AG04450 (cell line): ENCODE measurements at regions of chr4 and their contacts with region 1.

Region 1: GRCh38 chr4:67700738-67701516 is at the start of gene UBA6:
- DNase-seq: peak; percentile 92
- H3K4me3 ChIP-seq: peak within 1 kb of the TSS; percentile 78
- H3K27ac ChIP-seq: peak within 1 kb of the TSS; percentile 78
- H3K27me3 ChIP-seq: no peaks in the 10 kb centered on the region
- CTCF ChIP-seq: peak; percentile 40
- polyA plus RNA-seq, gene UBA6: 83.7 and 119 TPM in 2 replicates

Region 2: DNA sequence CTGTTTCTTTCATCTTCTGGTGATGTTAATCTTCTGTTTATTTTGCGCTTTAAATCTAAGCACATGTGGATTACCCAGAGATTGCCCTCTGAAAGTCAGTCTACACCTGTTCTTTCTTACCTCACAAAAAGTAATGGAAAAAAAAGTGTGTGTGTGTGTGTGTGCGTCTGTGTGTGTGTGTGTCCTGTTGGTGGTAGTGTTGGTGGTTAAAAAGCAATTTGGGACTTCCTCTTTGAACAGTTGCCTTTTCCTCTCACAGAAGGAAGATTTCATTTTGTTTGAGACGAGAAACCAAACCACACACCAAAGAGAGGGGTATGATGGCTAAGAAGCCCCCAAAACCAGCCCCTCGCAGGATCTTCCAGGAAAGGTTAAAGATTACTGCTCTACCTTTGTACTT is 142.4 kb before region 1 on chr4 and contains the start of gene STAP1:
- CTCF ChIA-PET with region 1: no interaction called
- POLR2A ChIA-PET with region 1: no interaction called
- DNase-seq: no peak
- H3K4me3 ChIP-seq: no peak within 1 kb of the TSS
- H3K27ac ChIP-seq: no peak within 1 kb of the TSS
- H3K27me3 ChIP-seq: peaks cover 3% of the 10 kb centered on the region
- CTCF ChIP-seq: no peak
- polyA plus RNA-seq, gene STAP1: not detected in 2 replicates

Region 3: GRCh38 chr4:67687636-67688035 is 13.3 kb before region 1 on chr4:
- CTCF ChIA-PET with region 1: interaction called, 11 read pairs
- POLR2A ChIA-PET with region 1: interaction called, 3 read pairs
- DNase-seq: peak; percentile 42
- H3K4me3 ChIP-seq: no peak overlapping the region
- H3K27ac ChIP-seq: no peak overlapping the region
- H3K27me3 ChIP-seq: no peaks in the 10 kb centered on the region
- CTCF ChIP-seq: no peak

Region 4: GRCh38 chr4:67721770-67722597 is 21.1 kb after region 1 on chr4:
- CTCF ChIA-PET with region 1: interaction called, 14 read pairs
- POLR2A ChIA-PET with region 1: no interaction called
- DNase-seq: no peak
- H3K4me3 ChIP-seq: no peak overlapping the region
- H3K27ac ChIP-seq: no peak overlapping the region
- H3K27me3 ChIP-seq: no peaks in the 10 kb centered on the region
- CTCF ChIP-seq: no peak

Region 5: GRCh38 chr4:68748181-68748991 is 1047.5 kb after region 1 on chr4:
- CTCF ChIA-PET with region 1: no interaction called
- POLR2A ChIA-PET with region 1: no interaction called
- DNase-seq: no peak
- H3K4me3 ChIP-seq: no peak overlapping the region
- H3K27ac ChIP-seq: no peak overlapping the region
- H3K27me3 ChIP-seq: no peaks in the 10 kb centered on the region
- CTCF ChIP-seq: no peak